OCI-LY7 (cell line): ENCODE measurements at regions of chr6 and their contacts with region 1.

Region 1: GRCh38 chr6:7238900-7239589 is 74.0 kb downstream of the SSR1 start:
- DNase-seq: peak; percentile 93
- H3K4me3 ChIP-seq: no peak overlapping the region
- H3K27ac ChIP-seq: no peak overlapping the region
- H3K4me1 ChIP-seq: peaks cover 27% of the 10 kb centered on the region
- CTCF ChIP-seq: peak; percentile 92

Region 2: DNA sequence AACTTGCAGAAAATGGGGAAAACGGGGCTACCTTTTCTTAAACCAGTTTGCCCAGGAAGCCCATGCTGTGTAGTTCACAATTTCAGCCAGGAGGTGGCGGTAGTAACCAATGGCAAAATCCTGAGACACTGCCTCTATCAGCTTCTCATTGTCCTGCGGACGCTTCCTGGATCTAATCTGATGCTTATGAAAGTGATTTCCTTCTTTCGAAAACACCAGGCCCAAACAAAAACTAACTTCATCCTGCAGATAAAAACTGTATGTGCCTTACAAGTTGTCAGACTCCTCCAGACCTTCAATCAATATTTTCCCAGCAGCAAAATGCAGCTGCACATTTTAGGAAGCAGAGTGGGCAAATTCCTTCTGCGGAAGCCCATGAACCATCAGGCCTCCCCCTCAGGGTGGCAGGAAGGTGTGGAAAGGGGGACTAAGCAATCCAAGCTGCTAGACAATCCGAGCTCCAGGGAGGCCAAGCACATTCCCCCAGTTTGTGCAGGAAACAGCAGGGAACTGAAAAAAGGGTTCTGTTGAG is 562.1 kb before region 1 on chr6:
- CTCF ChIA-PET with region 1: interaction called, 3 read pairs
- POLR2A ChIA-PET with region 1: no interaction called
- intact Hi-C with region 1: loop called (anchors 1 kb)
- DNase-seq: peak; percentile 79
- H3K4me3 ChIP-seq: no peak overlapping the region
- H3K27ac ChIP-seq: no peak overlapping the region
- H3K4me1 ChIP-seq: peaks cover 4% of the 10 kb centered on the region
- CTCF ChIP-seq: peak; percentile 98

Region 3: GRCh38 chr6:7107578-7108195 is 131.4 kb before region 1 on chr6 and contains the start of gene RREB1:
- CTCF ChIA-PET with region 1: no interaction called
- POLR2A ChIA-PET with region 1: interaction called, 3 read pairs
- intact Hi-C with region 1: loop called (anchors 5 kb)
- DNase-seq: peak; percentile 68
- H3K4me3 ChIP-seq: peak within 1 kb of the TSS; percentile 87
- H3K27ac ChIP-seq: no peak within 1 kb of the TSS
- H3K4me1 ChIP-seq: peaks cover 17% of the 10 kb centered on the region
- CTCF ChIP-seq: no peak
- total RNA-seq, gene RREB1: 3.4 and 4.4 TPM in 2 replicates

Region 4: GRCh38 chr6:7137335-7138045 is 101.6 kb before region 1 on chr6:
- CTCF ChIA-PET with region 1: no interaction called
- POLR2A ChIA-PET with region 1: interaction called, 4 read pairs
- intact Hi-C with region 1: loop called (anchors 2 kb)
- DNase-seq: peak; percentile 30
- H3K4me3 ChIP-seq: peak overlapping the region; percentile 33
- H3K27ac ChIP-seq: peak overlapping the region; percentile 2
- H3K4me1 ChIP-seq: peaks cover 34% of the 10 kb centered on the region
- CTCF ChIP-seq: no peak

Region 5: DNA sequence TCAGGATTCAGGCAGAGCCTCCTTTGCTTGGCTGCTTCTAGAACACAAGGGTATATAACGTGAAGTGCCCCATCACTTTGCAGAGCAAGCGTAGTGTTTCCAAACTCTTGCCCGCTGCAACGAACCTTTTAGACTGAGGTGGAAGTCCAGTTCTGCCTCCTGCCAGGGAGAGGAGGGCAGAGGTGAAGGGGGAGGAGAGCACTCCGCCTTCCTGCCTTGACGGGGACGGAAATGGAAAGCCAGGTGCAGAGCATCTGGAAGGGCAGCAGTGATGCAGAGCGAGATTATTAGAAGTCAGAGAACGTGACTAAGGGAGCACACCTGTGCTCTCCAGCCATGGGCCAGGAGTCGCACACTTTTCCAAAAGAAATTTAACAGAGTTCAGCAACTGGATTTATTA is 67.9 kb before region 1 on chr6:
- CTCF ChIA-PET with region 1: no interaction called
- POLR2A ChIA-PET with region 1: no interaction called
- intact Hi-C with region 1: loop called (anchors 2 kb)
- DNase-seq: peak; percentile 38
- H3K4me3 ChIP-seq: no peak overlapping the region
- H3K27ac ChIP-seq: no peak overlapping the region
- H3K4me1 ChIP-seq: peaks cover 16% of the 10 kb centered on the region
- CTCF ChIP-seq: no peak

Region 6: GRCh38 chr6:7324520-7324919 is 85.5 kb after region 1 on chr6:
- CTCF ChIA-PET with region 1: no interaction called
- POLR2A ChIA-PET with region 1: no interaction called
- intact Hi-C with region 1: no loop called
- DNase-seq: no peak
- H3K4me3 ChIP-seq: no peak overlapping the region
- H3K27ac ChIP-seq: no peak overlapping the region
- H3K4me1 ChIP-seq: peaks cover 7% of the 10 kb centered on the region
- CTCF ChIP-seq: no peak

Region 7: GRCh38 chr6:7367408-7367807 is 128.4 kb after region 1 on chr6:
- CTCF ChIA-PET with region 1: no interaction called
- POLR2A ChIA-PET with region 1: no interaction called
- intact Hi-C with region 1: no loop called
- DNase-seq: no peak
- H3K4me3 ChIP-seq: no peak overlapping the region
- H3K27ac ChIP-seq: no peak overlapping the region
- H3K4me1 ChIP-seq: no peaks in the 10 kb centered on the region
- CTCF ChIP-seq: no peak

Region 8: GRCh38 chr6:7550433-7550801 is 311.4 kb after region 1 on chr6:
- CTCF ChIA-PET with region 1: no interaction called
- POLR2A ChIA-PET with region 1: no interaction called
- intact Hi-C with region 1: no loop called
- DNase-seq: no peak
- H3K4me3 ChIP-seq: no peak overlapping the region
- H3K27ac ChIP-seq: no peak overlapping the region
- H3K4me1 ChIP-seq: no peaks in the 10 kb centered on the region
- CTCF ChIP-seq: no peak